ENCODE measurements at regions of chr6 and their contacts with region 1.

Region 1: GRCh38 chr6:132687306-132687705 is 26.5 kb downstream of the VNN1 start:
- DNase-seq: no peak
- ATAC-seq: peak; percentile 55

Region 2: GRCh38 chr6:131146865-131147264 is 1540.4 kb before region 1 on chr6:
- intact Hi-C with region 1: no loop called
- DNase-seq: no peak
- ATAC-seq: no peak

Region 3: DNA sequence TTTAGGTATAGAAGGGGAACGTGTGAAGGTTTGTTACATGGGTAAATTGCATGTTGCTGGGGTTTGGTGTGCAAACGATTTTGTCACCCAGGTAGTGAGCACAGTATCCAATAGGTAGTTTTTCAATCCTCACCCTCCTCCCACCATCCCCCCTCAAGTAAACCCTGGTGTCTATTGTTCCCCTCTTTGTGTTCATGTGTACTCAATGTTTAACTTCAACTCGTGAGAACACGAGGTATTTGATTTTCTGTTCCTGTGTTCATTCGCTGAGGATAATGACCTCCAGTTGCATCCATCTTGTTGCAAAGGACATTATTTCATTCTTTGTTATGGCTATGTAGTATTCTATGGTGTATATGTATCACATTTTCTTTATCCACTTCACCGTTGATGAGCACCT is 38.2 kb after region 1 on chr6:
- intact Hi-C with region 1: no loop called
- DNase-seq: no peak
- ATAC-seq: no peak

Region 4: DNA sequence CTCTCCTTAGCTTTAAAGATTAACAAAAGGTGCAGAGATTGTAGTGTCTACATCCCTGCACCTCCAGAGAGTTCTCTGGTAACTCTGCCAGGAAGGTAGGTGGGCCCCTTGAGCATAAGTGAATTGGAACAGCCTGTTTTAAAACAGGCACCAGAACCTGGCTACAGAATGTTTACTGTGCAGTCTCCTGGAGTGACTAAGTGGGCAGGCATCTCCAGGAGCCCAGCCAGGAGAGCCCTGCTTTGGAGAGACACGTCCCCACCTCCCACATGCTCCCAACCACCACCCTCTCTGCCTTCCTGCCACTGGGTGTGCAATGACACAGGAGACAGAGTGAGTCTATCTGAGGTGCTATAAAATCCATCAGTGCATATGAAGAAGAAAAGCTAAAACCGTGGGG is 443.6 kb after region 1 on chr6:
- intact Hi-C with region 1: no loop called
- DNase-seq: no peak
- ATAC-seq: no peak

Region 5: DNA sequence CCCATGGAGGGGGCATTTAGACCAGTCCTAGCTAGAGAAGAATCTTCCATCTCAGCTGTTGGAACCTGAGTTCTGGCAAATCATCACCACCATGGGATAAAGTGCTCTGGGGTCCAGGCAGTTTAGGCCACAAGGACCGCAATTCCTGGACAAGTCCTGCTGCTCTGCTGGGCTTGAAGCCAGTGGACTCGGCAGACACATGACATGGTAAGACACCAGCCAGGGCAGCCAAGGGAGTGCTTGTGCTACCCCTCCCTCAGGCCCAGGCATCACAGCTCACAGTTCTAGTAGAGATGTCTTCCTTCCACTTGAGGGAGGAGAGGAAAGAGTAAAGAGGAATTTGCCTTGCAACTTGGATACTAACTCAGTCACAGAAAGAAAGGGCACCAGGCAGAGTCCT is 799.9 kb after region 1 on chr6:
- intact Hi-C with region 1: loop called in 1 of 2 experiments (anchors 5 kb)
- DNase-seq: no peak
- ATAC-seq: no peak